ENCODE measurements at regions of chr1 and their contacts with region 1.

Region 1: DNA sequence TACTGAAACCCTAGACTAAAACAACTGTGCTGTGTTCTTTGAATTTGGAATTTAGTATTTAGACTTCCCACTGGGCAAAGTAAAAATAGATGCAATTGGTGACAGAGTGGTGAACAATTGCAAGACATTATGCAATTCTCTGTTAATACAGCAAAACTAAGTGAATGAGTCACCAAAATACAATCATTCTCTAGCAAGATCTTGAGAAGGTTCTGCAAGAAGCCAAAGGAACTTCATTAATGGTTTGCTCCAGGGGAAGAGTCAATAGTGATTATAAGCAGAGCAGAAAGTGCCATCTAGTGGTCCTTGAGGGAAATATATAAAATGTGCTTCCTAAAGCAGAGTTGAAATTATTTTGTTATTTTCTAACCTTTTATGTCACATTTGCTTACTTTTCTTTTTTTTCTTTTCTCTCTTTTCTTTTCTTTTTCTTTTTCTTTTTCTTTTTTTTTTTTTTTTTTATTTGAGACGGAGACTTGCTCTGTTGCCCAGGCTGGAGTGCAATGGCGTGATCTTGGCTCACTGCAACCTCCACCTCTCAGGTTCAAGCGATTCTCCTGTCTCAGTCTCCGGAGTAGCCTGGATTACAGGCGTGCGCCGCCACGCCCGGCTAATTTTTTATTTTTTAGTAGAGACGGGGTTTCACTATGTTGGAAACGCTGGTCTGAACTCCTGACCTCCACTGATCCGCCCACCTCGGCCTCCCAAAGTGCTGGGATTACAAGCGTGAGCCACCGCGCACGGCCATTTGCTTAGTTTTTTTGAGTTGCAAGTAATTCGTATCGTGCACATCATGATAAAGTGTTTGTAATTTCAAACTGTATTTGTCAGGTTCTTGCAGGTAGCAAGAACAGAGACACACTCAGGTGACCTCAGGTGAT is 99.2 kb downstream of the CTH start:
- DNase-seq: no peak
- ATAC-seq: peak; percentile 74 to 81
- H3K4me3 ChIP-seq: no peak overlapping the region
- H3K27ac ChIP-seq: no peak overlapping the region
- H3K4me1 ChIP-seq: no peaks in the 10 kb centered on the region
- H3K27me3 ChIP-seq: no peaks in the 10 kb centered on the region

Region 2: GRCh38 chr1:70134148-70134547 is 376.1 kb before region 1 on chr1:
- intact Hi-C with region 1: loop called in 2 of 4 experiments (anchors 5 to 10 kb)
- DNase-seq: no peak
- ATAC-seq: no peak
- H3K4me3 ChIP-seq: no peak overlapping the region
- H3K27ac ChIP-seq: no peak overlapping the region
- H3K4me1 ChIP-seq: no peaks in the 10 kb centered on the region
- H3K27me3 ChIP-seq: no peaks in the 10 kb centered on the region

Region 3: GRCh38 chr1:70436622-70437251 is 73.5 kb before region 1 on chr1:
- intact Hi-C with region 1: loop called in 1 of 4 experiments (anchors 10 kb)
- DNase-seq: no peak
- ATAC-seq: no peak
- H3K4me3 ChIP-seq: no peak overlapping the region
- H3K27ac ChIP-seq: no peak overlapping the region
- H3K4me1 ChIP-seq: no peaks in the 10 kb centered on the region
- H3K27me3 ChIP-seq: no peaks in the 10 kb centered on the region